Lower leg skin (tissue), 4 donors: ENCODE measurements at regions of chr10 and their contacts with region 1.

Region 1: GRCh38 chr10:80154975-80155695 is 22.6 kb downstream of the PLAC9 start:
- DNase-seq: no peak
- H3K4me3 ChIP-seq: no peak overlapping the region
- CTCF ChIP-seq: no peak
- POLR2A ChIP-seq: no peak

Region 2: GRCh38 chr10:78953113-78953798 is 1201.9 kb before region 1 on chr10:
- intact Hi-C with region 1: no loop called
- DNase-seq: no peak
- H3K4me3 ChIP-seq: no peak overlapping the region
- CTCF ChIP-seq: no peak
- POLR2A ChIP-seq: no peak

Region 3: DNA sequence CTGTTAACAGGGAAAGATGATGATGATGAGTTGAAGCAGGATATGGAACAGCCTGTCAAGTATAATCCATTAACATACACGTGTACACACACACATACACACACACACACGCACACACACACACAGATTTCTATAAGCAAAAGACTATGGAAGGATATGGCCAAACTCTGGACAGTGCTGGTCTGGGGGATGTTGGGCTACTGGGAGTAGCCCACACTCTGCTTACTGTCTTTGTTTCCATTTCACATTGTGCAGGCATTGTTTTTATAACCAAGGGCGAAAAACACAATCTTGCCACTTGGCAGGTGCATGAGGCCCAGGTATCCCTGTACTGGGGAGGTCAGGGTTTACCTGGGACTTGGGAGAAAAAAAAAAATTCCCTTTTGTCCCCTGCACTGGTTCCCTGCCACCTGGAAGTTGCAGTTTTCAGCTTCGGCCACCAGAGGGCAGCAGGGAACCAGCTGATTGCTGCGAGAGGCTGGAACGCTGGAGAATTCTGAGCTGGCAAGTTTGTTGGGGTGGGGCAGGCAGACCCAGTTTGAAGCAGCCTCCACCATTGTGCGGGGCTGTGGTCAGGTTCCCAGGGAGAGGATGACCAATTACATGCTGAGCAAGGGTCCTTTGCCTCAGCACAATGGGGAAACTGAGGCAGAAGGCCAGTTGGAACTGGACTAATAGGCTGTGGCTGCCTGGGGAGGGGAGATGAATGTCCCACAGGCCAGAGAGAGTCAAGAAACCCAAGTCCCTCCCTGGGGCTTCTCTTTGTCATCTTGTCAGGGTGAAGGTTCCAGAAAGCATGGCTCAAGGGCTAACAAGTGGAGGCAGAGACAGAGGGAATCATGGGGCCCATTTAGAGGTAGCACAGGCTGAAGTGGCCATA is 780.6 kb before region 1 on chr10:
- intact Hi-C with region 1: loop called (anchors 5 kb)
- DNase-seq: peak; percentile 68 to 96
- H3K4me3 ChIP-seq: no peak overlapping the region
- CTCF ChIP-seq: peak in 1 of 3 donors; percentile 88
- POLR2A ChIP-seq: no peak

Region 4: GRCh38 chr10:79628988-79629954 is 525.9 kb before region 1 on chr10:
- intact Hi-C with region 1: no loop called
- DNase-seq: no peak
- H3K4me3 ChIP-seq: no peak overlapping the region
- CTCF ChIP-seq: no peak
- POLR2A ChIP-seq: no peak

Region 5: GRCh38 chr10:80025281-80025680 is 129.9 kb before region 1 on chr10:
- intact Hi-C with region 1: no loop called
- DNase-seq: no peak
- H3K4me3 ChIP-seq: no peak overlapping the region
- CTCF ChIP-seq: no peak
- POLR2A ChIP-seq: no peak

Region 6: DNA sequence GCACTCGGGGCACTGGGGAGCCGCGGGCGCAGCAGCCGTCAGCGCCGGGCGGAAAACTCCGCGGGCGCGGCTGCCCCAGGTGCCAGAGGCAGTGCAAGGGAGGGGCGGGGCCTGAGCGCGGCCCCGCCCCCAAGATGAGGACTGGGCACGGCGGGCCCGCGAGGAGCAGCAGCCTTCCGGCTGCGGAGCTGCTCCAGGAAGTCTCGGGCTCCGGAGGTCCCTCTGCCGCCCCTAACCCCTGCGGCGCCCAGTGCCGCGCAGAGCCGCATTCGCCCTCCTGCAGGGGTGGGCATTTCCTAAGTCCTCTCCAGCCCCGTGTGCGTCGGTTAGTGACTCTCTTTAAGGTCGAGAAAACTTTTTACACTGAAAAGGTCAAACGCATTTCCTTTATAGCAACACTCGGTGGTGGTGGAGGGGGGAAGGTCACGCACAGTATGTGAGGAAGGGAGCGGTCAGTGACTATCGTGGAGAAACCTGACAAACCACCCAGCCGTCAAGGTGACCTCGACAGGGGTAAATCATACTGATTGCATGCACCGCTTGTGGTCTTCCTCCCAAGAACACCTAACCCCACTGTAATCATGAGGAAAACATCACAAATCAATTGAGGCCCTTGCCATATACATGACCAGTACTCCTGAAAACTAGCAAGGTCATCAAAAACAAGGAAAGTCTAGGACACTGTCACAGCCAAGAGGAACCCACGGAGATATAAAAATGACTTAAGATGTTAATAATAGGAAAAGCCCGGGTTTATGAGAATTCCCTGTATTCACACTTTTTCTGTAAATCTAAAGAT is 50.5 kb after region 1 on chr10 and contains the start of gene ANXA11:
- intact Hi-C with region 1: loop called (anchors 5 kb)
- DNase-seq: peak; percentile 76 to 96
- H3K4me3 ChIP-seq: peak within 1 kb of the TSS; percentile 93
- CTCF ChIP-seq: no peak
- POLR2A ChIP-seq: peak in 1 of 2 donors; percentile 63
- total RNA-seq, gene ANXA11: 68.4 to 109 (median 100) TPM